Caco-2 (cell line): ENCODE measurements at regions of chr11 and their contacts with region 1.

Region 1: GRCh38 chr11:125275905-125276618 is 111.5 kb downstream of the PKNOX2 start:
- DNase-seq: no peak
- H3K4me3 ChIP-seq: no peak overlapping the region
- H3K4me3 Mint-ChIP-seq: no peak overlapping the region
- H3K27ac Mint-ChIP-seq: no peak overlapping the region
- H3K4me1 ChIP-seq: no peaks in the 10 kb centered on the region
- H3K4me1 Mint-ChIP-seq: no peaks in the 10 kb centered on the region
- H3K27me3 ChIP-seq: peaks cover 1% of the 10 kb centered on the region; the same call in 1 of the 2 replicates
- H3K27me3 Mint-ChIP-seq: peaks cover 17% of the 10 kb centered on the region
- CTCF ChIP-seq: no peak

Region 2: GRCh38 chr11:125201525-125202141 is 74.4 kb before region 1 on chr11:
- CTCF ChIA-PET with region 1: no interaction called
- POLR2A ChIA-PET with region 1: no interaction called
- intact Hi-C with region 1: no loop called
- DNase-seq: no peak
- H3K4me3 ChIP-seq: no peak overlapping the region
- H3K4me3 Mint-ChIP-seq: no peak overlapping the region
- H3K27ac Mint-ChIP-seq: no peak overlapping the region
- H3K4me1 ChIP-seq: no peaks in the 10 kb centered on the region
- H3K4me1 Mint-ChIP-seq: no peaks in the 10 kb centered on the region
- H3K27me3 ChIP-seq: peaks cover 2% of the 10 kb centered on the region
- H3K27me3 Mint-ChIP-seq: peaks cover 40% of the 10 kb centered on the region
- CTCF ChIP-seq: no peak

Region 3: GRCh38 chr11:125494974-125495725 is 219.1 kb after region 1 on chr11:
- CTCF ChIA-PET with region 1: no interaction called
- POLR2A ChIA-PET with region 1: no interaction called
- intact Hi-C with region 1: loop called (anchors 10 kb)
- DNase-seq: peak in 1 of 2 experiments; percentile 32
- H3K4me3 ChIP-seq: peak overlapping the region; percentile 35
- H3K4me3 Mint-ChIP-seq: peak overlapping the region; percentile 91
- H3K27ac Mint-ChIP-seq: no peak overlapping the region
- H3K4me1 ChIP-seq: peaks cover 7% of the 10 kb centered on the region; the same call in 1 of the 2 replicates
- H3K4me1 Mint-ChIP-seq: no peaks in the 10 kb centered on the region
- H3K27me3 ChIP-seq: peaks cover 10% of the 10 kb centered on the region
- H3K27me3 Mint-ChIP-seq: peaks cover 39% of the 10 kb centered on the region
- CTCF ChIP-seq: no peak

Region 4: DNA sequence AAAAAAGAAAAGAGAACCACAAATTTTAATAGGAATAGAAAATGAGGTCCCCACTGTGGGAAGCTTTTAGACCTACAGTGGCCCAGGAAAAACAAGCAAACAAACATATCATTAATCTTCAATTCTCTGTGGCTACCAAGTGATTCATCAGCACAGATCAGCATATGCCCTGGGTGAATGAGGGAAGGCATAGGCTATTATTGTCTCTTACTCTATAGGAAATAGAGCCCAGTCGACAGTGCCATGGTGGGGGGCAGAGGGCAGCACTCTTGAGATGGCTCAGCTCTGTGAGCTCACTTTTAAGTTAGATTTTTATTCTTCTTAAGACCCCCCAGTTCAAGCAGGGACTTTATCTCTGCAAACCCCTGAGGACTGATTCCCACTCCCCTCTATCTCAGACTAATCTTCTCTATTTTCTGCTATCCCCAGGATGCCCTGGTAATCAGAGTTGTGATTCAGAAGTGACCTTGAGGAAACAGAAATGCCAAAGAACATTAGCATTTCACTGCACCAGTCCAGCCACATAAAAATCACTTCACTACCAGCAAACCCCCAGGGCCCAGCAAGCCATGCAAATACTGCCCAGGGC is 229.5 kb after region 1 on chr11:
- CTCF ChIA-PET with region 1: no interaction called
- POLR2A ChIA-PET with region 1: no interaction called
- intact Hi-C with region 1: no loop called
- DNase-seq: no peak
- H3K4me3 ChIP-seq: no peak overlapping the region
- H3K4me3 Mint-ChIP-seq: no peak overlapping the region
- H3K27ac Mint-ChIP-seq: no peak overlapping the region
- H3K4me1 ChIP-seq: peaks cover 18% of the 10 kb centered on the region
- H3K4me1 Mint-ChIP-seq: peaks cover 7% of the 10 kb centered on the region
- H3K27me3 ChIP-seq: no peaks in the 10 kb centered on the region
- H3K27me3 Mint-ChIP-seq: peaks cover 2% of the 10 kb centered on the region
- CTCF ChIP-seq: no peak